ENCODE measurements at regions of chr1 and their contacts with region 1.

Region 1: DNA sequence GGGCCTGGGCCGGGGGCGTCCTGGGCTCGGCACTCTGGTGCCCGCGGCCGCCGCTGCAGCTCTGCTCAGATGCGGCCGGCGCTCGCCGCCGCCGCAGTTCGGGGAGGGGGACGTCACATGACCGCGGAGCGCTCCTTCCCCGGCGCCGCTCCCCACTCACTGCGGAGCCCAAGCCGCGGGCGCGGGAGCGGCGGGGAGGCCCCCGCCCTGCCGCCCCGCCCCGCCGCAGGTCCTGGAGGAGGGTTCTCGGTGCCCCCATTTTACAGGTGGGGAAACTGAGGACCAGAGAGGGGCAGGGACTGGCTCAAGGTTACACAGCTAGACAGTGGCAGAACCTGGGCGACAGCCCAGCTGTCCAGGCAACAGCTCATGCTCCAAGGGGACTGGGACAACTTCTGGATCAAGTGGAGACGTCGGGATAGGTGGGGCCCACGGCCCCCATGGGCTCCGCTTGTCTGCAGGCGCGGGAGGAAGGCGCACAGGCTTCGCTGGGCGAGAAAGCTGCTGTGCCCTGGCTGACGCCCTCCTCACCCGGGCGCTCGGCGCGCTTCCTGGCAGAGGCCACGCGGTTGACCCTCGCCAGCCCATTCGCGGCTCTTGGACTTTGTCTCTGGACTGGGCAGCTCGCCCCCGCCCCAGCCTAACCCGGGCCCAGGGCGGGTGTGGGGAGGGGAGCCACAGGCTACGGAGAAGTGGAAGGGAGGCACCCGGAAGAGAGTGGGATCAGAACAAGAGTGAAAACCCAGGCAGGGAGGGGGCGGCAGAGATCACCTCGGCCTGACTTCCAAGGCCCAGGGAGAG is at the start of gene RAP1GAP:
- DNase-seq: peak; percentile 89 to 93 (median 92)
- ATAC-seq: peak; percentile 87
- H3K4me3 ChIP-seq: peak within 1 kb of the TSS; percentile 56
- H3K27ac ChIP-seq: peak within 1 kb of the TSS; percentile 85
- H3K4me1 ChIP-seq: peaks cover 40 to 51% of the 10 kb centered on the region in 2 experiments
- H3K27me3 ChIP-seq: no peaks in the 10 kb centered on the region
- CTCF ChIP-seq: peak; percentile 39 to 60 (median 54); a peak in 4 of 6 replicates
- EP300 ChIP-seq: no peak
- POLR2A ChIP-seq: peak; percentile 56; the same call in 1 of the 2 replicates
- RAD21 ChIP-seq: peak; percentile 34 to 62
- polyA plus RNA-seq, gene RAP1GAP: 0.29 to 0.51 TPM

Region 2: GRCh38 chr1:21680918-21681317 is 11.5 kb after region 1 on chr1:
- CTCF ChIA-PET with region 1: no interaction called
- POLR2A ChIA-PET with region 1: interaction called, 13 read pairs
- in situ Hi-C with region 1: no loop called
- intact Hi-C with region 1: loop called (anchors 2 kb)
- DNase-seq: no peak
- ATAC-seq: no peak
- H3K4me3 ChIP-seq: no peak overlapping the region
- H3K27ac ChIP-seq: no peak overlapping the region
- H3K4me1 ChIP-seq: peaks cover 8 to 17% of the 10 kb centered on the region in 2 experiments; a peak in 4 of 5 replicates
- H3K27me3 ChIP-seq: no peaks in the 10 kb centered on the region
- CTCF ChIP-seq: no peak
- EP300 ChIP-seq: no peak
- POLR2A ChIP-seq: no peak
- RAD21 ChIP-seq: no peak

Region 3: DNA sequence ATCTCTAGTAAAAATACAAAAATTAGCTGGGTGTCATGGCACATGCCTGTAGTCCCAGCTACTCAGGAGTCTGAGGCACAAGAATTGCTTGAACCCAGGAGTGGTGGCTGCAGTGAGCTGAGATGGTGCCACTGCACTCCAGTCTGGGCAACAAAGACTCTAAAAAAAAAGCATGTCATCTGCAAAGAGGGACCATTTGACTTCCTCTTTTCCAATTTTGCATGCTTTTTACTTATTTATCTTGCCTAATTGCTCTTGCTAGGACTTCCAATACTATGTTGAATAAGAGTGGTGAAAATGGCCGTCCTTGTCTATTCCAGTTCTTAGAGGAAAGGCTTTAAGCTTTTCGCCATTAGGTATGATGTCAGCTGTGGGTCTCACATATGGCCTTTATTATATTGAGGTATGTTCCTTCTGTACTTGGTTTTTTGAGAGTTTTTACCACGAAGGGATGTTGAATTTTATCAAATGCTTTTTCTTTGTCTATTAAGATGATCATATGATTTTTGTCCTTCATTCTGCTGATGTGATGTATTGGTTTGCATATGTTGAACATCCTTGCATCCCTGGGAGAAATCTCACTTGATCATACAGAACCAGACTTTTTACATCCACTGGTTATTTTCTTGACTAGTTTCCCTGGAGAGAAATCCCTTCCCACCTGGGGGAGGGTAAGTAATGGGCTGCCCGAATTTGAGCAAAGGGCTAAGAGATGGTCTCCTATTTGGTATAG is 16.7 kb after region 1 on chr1:
- CTCF ChIA-PET with region 1: no interaction called
- POLR2A ChIA-PET with region 1: interaction called, 13 read pairs
- in situ Hi-C with region 1: no loop called
- intact Hi-C with region 1: loop called (anchors 2 kb)
- DNase-seq: no peak
- ATAC-seq: no peak
- H3K4me3 ChIP-seq: no peak overlapping the region
- H3K27ac ChIP-seq: peak overlapping the region; percentile 89; the same call in 2 of the 3 replicates
- H3K4me1 ChIP-seq: peaks cover 8 to 34% of the 10 kb centered on the region in 2 experiments; a peak in 4 of 5 replicates
- H3K27me3 ChIP-seq: no peaks in the 10 kb centered on the region
- CTCF ChIP-seq: no peak
- EP300 ChIP-seq: no peak
- POLR2A ChIP-seq: no peak
- RAD21 ChIP-seq: no peak

Region 4: GRCh38 chr1:21734526-21734925 is 65.1 kb after region 1 on chr1:
- CTCF ChIA-PET with region 1: no interaction called
- POLR2A ChIA-PET with region 1: no interaction called
- in situ Hi-C with region 1: no loop called
- intact Hi-C with region 1: no loop called
- DNase-seq: no peak
- ATAC-seq: no peak
- H3K4me3 ChIP-seq: no peak overlapping the region
- H3K27ac ChIP-seq: no peak overlapping the region
- H3K4me1 ChIP-seq: no peaks in the 10 kb centered on the region
- H3K27me3 ChIP-seq: no peaks in the 10 kb centered on the region
- CTCF ChIP-seq: no peak
- EP300 ChIP-seq: no peak
- POLR2A ChIP-seq: no peak
- RAD21 ChIP-seq: no peak